PC-9 (cell line): ENCODE measurements at regions of chr1 and their contacts with region 1.

Region 1: DNA sequence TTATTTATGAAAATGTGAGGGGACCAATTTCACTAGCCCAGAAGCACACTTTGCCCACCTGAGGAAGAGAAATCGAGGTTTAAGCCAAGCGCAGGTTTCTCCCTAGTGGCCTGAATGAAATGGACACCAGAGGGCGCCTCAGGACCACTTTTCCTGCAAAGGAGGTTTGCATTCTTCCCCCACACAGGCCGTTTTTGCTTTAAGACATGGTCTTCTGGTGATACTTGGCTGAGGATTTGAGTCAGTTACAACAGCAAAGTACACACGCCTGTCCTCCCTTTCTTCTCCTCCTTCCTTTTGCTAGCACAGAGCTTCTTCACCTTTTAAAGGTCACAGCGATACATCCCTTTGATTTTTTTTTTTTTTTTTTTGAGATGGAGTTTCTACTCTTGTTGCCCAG is 5.4 kb downstream of the PLA2G2E start:
- DNase-seq: peak; percentile 57 to 75
- H3K4me3 ChIP-seq: no peak overlapping the region
- H3K27ac ChIP-seq: no peak overlapping the region
- H3K4me1 ChIP-seq: peaks cover 26% of the 10 kb centered on the region
- H3K27me3 ChIP-seq: no peaks in the 10 kb centered on the region
- CTCF ChIP-seq: peak; percentile 87

Region 2: GRCh38 chr1:19682257-19682656 is 235.8 kb before region 1 on chr1:
- CTCF ChIA-PET with region 1: interaction called, 11 read pairs
- POLR2A ChIA-PET with region 1: no interaction called
- intact Hi-C with region 1: no loop called
- DNase-seq: no peak
- H3K4me3 ChIP-seq: no peak overlapping the region
- H3K27ac ChIP-seq: no peak overlapping the region
- H3K4me1 ChIP-seq: no peaks in the 10 kb centered on the region
- H3K27me3 ChIP-seq: no peaks in the 10 kb centered on the region
- CTCF ChIP-seq: no peak

Region 3: GRCh38 chr1:19988267-19989006 is 70.4 kb after region 1 on chr1:
- CTCF ChIA-PET with region 1: no interaction called
- POLR2A ChIA-PET with region 1: no interaction called
- intact Hi-C with region 1: no loop called
- DNase-seq: no peak
- H3K4me3 ChIP-seq: no peak overlapping the region
- H3K27ac ChIP-seq: no peak overlapping the region
- H3K4me1 ChIP-seq: no peaks in the 10 kb centered on the region
- H3K27me3 ChIP-seq: no peaks in the 10 kb centered on the region
- CTCF ChIP-seq: no peak

Region 4: GRCh38 chr1:20194757-20195461 is 276.9 kb after region 1 on chr1:
- CTCF ChIA-PET with region 1: no interaction called
- POLR2A ChIA-PET with region 1: interaction called, 12 read pairs
- intact Hi-C with region 1: no loop called
- DNase-seq: peak in 1 of 2 experiments; percentile 49
- H3K4me3 ChIP-seq: no peak overlapping the region
- H3K27ac ChIP-seq: no peak overlapping the region
- H3K4me1 ChIP-seq: peaks cover 19% of the 10 kb centered on the region
- H3K27me3 ChIP-seq: no peaks in the 10 kb centered on the region
- CTCF ChIP-seq: peak; percentile 70

Region 5: DNA sequence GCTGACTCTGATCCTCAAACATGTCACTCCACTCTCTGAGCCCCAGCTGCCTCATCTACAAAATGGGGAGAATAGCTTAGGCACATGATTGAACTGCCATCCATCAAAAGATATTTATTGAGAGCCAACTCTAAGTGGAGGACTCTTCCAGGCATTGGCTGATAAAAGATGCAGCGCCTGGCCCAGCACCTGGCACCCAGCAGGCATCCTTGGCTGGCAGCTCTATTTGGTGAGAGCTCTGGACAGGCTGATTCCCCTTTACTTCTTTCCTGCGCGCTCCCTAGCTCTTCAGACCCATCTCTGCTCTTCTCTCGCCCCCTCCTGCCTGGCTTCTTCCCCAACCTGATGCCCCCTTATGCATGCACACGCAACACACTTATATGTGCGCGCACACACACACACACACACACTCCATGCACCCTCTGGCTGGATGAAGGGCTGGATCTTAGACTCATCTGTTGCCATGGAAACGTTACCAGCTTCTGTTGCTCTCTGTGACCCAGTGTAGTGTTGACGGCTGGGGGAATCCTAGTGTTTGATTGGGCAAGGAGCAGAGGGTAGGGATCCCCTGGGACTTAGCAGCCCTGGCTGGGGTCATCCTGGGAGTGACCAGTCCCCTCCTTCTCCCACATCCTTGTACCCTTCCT is 421.9 kb after region 1 on chr1:
- CTCF ChIA-PET with region 1: no interaction called
- POLR2A ChIA-PET with region 1: no interaction called
- intact Hi-C with region 1: no loop called
- DNase-seq: no peak
- H3K4me3 ChIP-seq: no peak overlapping the region
- H3K27ac ChIP-seq: no peak overlapping the region
- H3K4me1 ChIP-seq: no peaks in the 10 kb centered on the region
- H3K27me3 ChIP-seq: no peaks in the 10 kb centered on the region
- CTCF ChIP-seq: no peak

Region 6: DNA sequence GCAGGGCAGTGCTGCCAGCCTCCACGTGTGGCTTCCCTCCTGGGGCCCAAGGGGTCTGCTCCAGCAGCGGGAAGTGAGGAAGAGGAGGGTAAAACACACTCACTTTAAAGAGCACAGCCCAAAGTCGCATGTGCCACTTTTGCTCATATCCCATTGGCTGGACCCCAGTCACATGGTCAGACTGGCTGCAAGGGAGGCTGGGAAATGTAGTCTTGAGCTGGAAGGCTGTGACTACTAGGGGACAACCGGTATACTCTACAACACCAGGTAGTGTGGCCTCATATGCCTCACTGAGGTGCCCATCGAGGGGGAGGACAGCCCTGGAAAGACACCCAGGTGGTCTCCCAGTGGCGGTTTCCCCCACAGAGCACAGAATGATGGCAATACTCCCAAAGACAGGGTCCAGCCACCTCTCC is 522.7 kb after region 1 on chr1:
- CTCF ChIA-PET with region 1: no interaction called
- POLR2A ChIA-PET with region 1: no interaction called
- intact Hi-C with region 1: no loop called
- DNase-seq: peak; percentile 40 to 46
- H3K4me3 ChIP-seq: no peak overlapping the region
- H3K27ac ChIP-seq: no peak overlapping the region
- H3K4me1 ChIP-seq: no peaks in the 10 kb centered on the region; the same call in 1 of the 2 replicates
- H3K27me3 ChIP-seq: no peaks in the 10 kb centered on the region
- CTCF ChIP-seq: no peak

Region 7: DNA sequence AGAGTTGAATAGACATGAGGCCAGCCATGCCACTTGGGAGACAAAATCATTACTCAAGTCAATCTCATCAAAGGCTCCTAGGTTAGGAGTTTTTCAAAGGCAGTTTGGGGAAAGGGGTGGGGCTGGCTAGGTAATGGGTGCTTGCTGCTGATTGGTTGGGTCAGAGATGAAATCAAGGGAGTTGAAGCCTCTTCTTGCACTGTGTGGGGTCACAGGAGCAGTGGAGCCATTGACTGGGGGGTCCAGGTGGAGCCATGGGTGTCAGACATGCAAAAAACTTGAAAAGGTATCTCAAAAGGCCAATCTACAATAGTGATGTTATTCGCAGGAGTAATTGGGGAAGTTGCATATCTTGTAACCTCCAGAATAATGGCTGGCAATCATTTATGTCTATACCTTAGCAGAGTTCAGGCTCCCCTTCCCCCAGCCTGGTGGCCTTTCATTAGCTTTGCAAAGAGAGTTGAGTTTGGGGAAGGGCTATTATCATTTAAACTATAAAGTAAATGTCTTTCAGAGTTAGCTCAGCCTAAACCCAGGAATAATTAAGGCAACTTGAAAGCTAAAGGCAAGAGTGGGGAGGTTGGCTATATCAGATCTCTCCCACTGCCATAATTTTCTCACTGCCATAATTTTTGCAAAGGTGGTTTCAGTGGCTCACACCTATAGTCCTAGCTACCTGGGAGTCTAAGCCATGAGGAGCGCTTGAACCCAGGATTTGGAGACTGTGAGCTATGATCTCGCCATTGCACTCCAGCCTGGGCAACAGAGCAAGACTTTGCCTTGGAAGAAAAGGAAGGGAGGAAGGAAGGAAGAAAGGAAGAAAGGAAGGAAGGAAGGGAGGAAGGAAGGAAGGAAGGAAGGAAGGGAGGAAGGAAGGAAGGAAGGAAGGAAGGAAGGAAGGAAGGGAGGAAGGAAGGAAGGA is 707.4 kb after region 1 on chr1:
- CTCF ChIA-PET with region 1: no interaction called
- POLR2A ChIA-PET with region 1: interaction called, 17 read pairs
- intact Hi-C with region 1: loop called (anchors 10 kb)
- DNase-seq: no peak
- H3K4me3 ChIP-seq: no peak overlapping the region
- H3K27ac ChIP-seq: no peak overlapping the region
- H3K4me1 ChIP-seq: no peaks in the 10 kb centered on the region
- H3K27me3 ChIP-seq: no peaks in the 10 kb centered on the region
- CTCF ChIP-seq: no peak